Activated CD8-positive, alpha-beta memory T cell treated with anti-CD3 and anti-CD28 coated beads, Interleukin-2, amount 10 ng/mL, durations not matched to agents 7 days and 5 days (primary cell): ENCODE measurements at regions of chr2 and their contacts with region 1.

Region 1: GRCh38 chr2:126776692-126777619 is 121.0 kb downstream of the GYPC start:
- DNase-seq: peak; percentile 85
- ATAC-seq: peak; percentile 92
- H3K4me3 Mint-ChIP-seq: peak overlapping the region; percentile 81
- H3K27ac Mint-ChIP-seq: peak overlapping the region; percentile 72
- H3K4me1 Mint-ChIP-seq: peaks cover 9% of the 10 kb centered on the region
- H3K27me3 Mint-ChIP-seq: peaks cover 24% of the 10 kb centered on the region

Region 2: GRCh38 chr2:126527836-126528507 is 249.0 kb before region 1 on chr2:
- CTCF ChIA-PET with region 1: interaction called, 57 read pairs
- DNase-seq: peak; percentile 75
- ATAC-seq: peak; percentile 63
- H3K4me3 Mint-ChIP-seq: no peak overlapping the region
- H3K27ac Mint-ChIP-seq: no peak overlapping the region
- H3K4me1 Mint-ChIP-seq: no peaks in the 10 kb centered on the region
- H3K27me3 Mint-ChIP-seq: no peaks in the 10 kb centered on the region

Region 3: GRCh38 chr2:126664234-126664633 is 112.7 kb before region 1 on chr2:
- CTCF ChIA-PET with region 1: interaction called, 13 read pairs
- DNase-seq: peak; percentile 68
- ATAC-seq: peak; percentile 69
- H3K4me3 Mint-ChIP-seq: peak overlapping the region; percentile 49
- H3K27ac Mint-ChIP-seq: peak overlapping the region; percentile 95
- H3K4me1 Mint-ChIP-seq: peaks cover 72% of the 10 kb centered on the region
- H3K27me3 Mint-ChIP-seq: no peaks in the 10 kb centered on the region

Region 4: DNA sequence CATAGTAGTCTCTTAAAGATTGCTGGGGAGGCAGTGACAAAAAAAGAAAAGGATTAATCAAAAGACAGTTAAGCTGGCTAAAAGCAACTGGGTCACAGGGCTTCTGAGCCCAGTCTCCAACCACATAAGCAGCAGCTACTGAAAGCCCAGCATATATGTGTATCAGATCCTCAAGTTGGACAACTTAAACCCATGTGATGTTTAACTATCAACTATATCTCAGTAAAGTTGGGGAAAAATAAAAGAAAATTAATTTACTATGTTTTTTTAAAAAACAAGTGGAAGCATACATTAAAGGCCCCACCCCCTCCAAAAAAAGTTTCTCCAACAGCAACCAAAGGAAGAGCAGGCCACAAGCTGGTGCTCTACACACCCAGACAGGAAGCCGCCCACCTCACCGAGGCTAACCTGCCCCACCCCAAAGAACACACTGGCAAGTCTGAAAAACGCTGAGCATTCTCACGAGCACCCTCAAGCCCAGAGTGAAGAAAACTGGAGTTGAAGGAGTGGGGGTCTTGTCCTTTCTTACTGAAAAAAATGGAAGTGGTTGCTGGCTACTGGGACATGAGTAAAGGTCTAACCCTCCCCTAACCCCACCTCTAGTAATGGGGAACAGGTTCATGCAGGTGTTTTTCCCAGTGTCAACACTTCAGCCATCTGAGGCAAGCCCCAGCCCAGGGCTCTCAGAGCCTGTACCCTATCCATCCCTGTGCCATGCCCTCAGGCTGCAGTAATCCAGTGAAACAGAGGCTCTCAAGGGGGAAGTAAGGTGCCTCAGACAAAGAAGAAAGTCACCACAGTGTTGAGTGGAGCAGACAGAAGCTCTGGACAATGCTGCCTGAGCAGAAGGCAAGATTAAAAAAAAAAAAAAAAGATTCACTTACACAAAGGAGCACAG is 14.7 kb before region 1 on chr2:
- CTCF ChIA-PET with region 1: interaction called, 18 read pairs
- DNase-seq: peak; percentile 87
- ATAC-seq: peak; percentile 92
- H3K4me3 Mint-ChIP-seq: peak overlapping the region; percentile 34
- H3K27ac Mint-ChIP-seq: peak overlapping the region; percentile 79
- H3K4me1 Mint-ChIP-seq: peaks cover 29% of the 10 kb centered on the region
- H3K27me3 Mint-ChIP-seq: peaks cover 28% of the 10 kb centered on the region